ENCODE measurements at regions of chr7 and their contacts with region 1.

Region 1: DNA sequence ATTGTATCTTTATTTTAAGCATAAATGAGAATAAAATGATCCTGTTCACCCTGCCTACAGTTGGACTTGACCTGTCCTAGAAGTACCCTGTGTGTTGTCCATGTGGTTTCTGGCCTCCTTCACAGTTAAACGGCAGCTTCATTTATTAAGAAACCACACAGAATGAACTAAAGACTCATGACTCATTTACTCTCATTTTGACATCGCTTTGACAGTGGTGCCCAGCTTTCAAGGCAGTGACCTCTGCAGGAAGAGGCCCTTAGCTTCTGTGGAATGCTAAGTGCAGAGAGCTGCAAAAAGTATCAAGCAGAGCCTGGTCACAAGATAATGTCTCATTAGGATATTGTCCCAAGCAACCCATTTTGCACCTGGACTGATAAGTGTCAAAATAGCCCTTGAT is 93.4 kb downstream of the AVL9 start:
- DNase-seq: peak; percentile 85
- H3K4me3 ChIP-seq: no peak overlapping the region
- H3K27ac ChIP-seq: peak overlapping the region; percentile 91
- H3K4me1 ChIP-seq: peaks cover 49% of the 10 kb centered on the region
- H3K27me3 ChIP-seq: no peaks in the 10 kb centered on the region
- CTCF ChIP-seq: peak in 1 of 2 donors; percentile 6
- POLR2A ChIP-seq: no peak

Region 2: GRCh38 chr7:32495298-32496176 is 93.1 kb before region 1 on chr7 and contains the start of gene AVL9:
- CTCF ChIA-PET with region 1: interaction called, 7 read pairs
- POLR2A ChIA-PET with region 1: interaction called, 7 read pairs
- dilution Hi-C with region 1: no loop called
- intact Hi-C with region 1: loop called (anchors 1 kb)
- DNase-seq: peak; percentile 96
- H3K4me3 ChIP-seq: peak within 1 kb of the TSS; percentile 89 to 100 (median 100)
- H3K27ac ChIP-seq: peak within 1 kb of the TSS; percentile 82
- H3K4me1 ChIP-seq: peaks cover 13% of the 10 kb centered on the region
- H3K27me3 ChIP-seq: no peaks in the 10 kb centered on the region
- CTCF ChIP-seq: no peak
- POLR2A ChIP-seq: peak; percentile 97
- total RNA-seq, gene AVL9: 42.5 and 44.1 TPM in 2 replicates

Region 3: GRCh38 chr7:32658034-32658944 is 69.6 kb after region 1 on chr7:
- CTCF ChIA-PET with region 1: no interaction called
- POLR2A ChIA-PET with region 1: no interaction called
- dilution Hi-C with region 1: no loop called
- intact Hi-C with region 1: loop called (anchors 2 kb)
- DNase-seq: peak; percentile 55
- H3K4me3 ChIP-seq: peak overlapping the region in 1 of 3 experiments; percentile 11
- H3K27ac ChIP-seq: peak overlapping the region; percentile 23
- H3K4me1 ChIP-seq: peaks cover 11% of the 10 kb centered on the region
- H3K27me3 ChIP-seq: no peaks in the 10 kb centered on the region
- CTCF ChIP-seq: no peak
- POLR2A ChIP-seq: no peak

Region 4: DNA sequence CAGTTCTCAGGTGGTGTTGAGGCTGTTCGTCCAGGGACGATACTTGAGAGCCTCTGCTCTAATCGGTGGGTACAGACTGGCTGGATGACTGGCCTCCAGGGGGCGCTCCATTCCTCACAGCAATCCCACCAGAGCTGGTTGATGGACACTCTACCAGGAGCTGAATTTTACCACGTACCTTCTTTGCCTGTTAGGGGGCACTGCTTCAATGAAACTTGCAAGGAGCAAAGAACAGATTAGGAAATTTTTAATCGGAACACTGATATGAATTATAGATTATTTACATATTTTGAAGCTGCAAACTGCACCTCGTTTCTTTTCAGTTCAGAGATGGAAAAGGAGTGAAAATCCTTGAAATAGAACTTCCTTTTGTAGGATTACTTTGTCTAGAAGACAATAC is 258.0 kb after region 1 on chr7:
- CTCF ChIA-PET with region 1: no interaction called
- POLR2A ChIA-PET with region 1: no interaction called
- dilution Hi-C with region 1: no loop called
- intact Hi-C with region 1: no loop called
- DNase-seq: peak; percentile 79
- H3K4me3 ChIP-seq: no peak overlapping the region
- H3K27ac ChIP-seq: no peak overlapping the region
- H3K4me1 ChIP-seq: no peaks in the 10 kb centered on the region
- H3K27me3 ChIP-seq: no peaks in the 10 kb centered on the region
- CTCF ChIP-seq: peak; percentile 73 to 88
- POLR2A ChIP-seq: no peak

Region 5: DNA sequence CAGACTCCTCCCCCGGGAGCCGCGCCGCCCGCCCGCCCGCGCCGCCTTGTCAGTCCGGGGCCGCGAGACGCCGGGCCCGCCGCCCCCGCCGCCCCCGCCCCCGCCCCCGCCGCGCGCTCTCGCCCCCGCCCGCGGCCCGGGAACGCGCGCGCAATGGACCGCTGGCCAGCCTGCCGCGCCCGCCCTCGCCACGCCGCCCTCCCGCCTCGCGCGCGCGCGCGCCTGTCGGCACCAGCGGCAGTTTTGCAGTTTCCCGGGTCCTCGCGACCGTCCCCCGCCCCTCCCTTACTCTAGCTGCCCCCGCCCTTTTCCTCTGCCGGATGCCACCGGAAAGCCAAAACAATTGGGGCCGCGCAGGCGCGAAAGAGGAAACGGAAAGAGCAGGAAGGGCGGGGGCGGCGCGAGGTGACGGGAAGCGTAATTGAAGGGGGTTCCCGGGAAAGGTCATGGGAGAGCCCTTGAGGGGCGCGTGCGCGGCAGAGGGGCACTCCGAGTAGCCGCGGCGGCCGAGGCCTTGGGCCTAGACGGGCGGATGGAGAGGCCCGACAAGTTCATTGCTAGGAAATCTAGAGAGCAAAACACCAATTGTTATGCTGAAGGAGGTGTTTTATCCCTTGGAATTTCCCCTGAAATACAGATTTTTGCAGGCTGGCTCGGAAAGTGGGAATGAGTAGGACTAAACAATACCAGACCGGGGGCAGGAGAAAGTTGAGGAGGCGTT is 303.3 kb after region 1 on chr7:
- CTCF ChIA-PET with region 1: no interaction called
- POLR2A ChIA-PET with region 1: no interaction called
- dilution Hi-C with region 1: no loop called
- intact Hi-C with region 1: loop called (anchors 2 kb)
- DNase-seq: peak; percentile 96
- H3K4me3 ChIP-seq: peak overlapping the region in 2 of 3 experiments; percentile 68 to 90
- H3K27ac ChIP-seq: peak overlapping the region; percentile 99
- H3K4me1 ChIP-seq: peaks cover 46% of the 10 kb centered on the region
- H3K27me3 ChIP-seq: no peaks in the 10 kb centered on the region
- CTCF ChIP-seq: no peak
- POLR2A ChIP-seq: no peak